ENCODE measurements at regions of chr17 and their contacts with region 1.

Region 1: DNA sequence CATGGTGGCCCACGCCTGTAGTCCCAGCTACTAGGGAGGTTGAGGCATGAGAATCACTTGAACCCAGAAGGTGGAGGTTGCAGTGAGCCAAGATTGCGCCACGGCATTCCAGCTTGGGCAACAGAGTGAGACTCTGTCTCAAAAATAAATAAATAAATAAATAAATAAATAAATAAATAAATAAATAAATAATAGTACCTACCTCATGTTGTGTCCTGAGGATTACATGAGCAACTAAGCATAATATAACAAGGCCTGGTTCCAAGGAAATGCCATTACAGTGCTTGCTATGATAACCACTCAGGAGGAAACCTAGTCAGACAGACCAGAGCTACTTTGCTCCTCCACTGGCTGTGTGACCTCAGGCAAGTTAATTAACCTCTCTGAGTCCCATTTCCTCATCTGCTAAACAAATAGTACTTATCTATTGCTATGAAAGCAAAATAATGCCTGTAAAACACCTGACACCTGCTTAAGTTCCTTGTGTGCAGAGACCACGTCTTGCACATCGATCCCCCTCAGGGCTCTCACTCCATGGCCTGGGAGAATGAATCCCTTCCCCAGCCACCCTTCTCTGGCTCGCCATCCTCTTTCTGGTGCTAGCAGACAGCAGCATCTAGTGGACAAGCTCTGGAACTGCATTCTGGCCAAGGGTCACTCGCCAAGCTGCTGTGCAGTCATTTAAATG is 7.5 kb downstream of the EPOP start:
- DNase-seq: peak; percentile 51 to 78
- H3K4me3 ChIP-seq: no peak overlapping the region
- H3K27ac ChIP-seq: no peak overlapping the region
- H3K4me1 ChIP-seq: peaks cover 4 to 28% (median 16%) of the 10 kb centered on the region in 4 experiments; a peak in 6 of 7 replicates
- H3K27me3 ChIP-seq: peaks cover 26 to 49% (median 46%) of the 10 kb centered on the region in 4 experiments
- CTCF ChIP-seq: peak; percentile 98 to 100 (median 99)
- EP300 ChIP-seq: no peak
- POLR2A ChIP-seq: no peak
- RAD21 ChIP-seq: peak; percentile 100

Region 2: GRCh38 chr17:38454516-38454915 is 212.7 kb before region 1 on chr17:
- CTCF ChIA-PET with region 1: interaction called, 10 read pairs
- POLR2A ChIA-PET with region 1: interaction called, 3 read pairs
- DNase-seq: no peak
- H3K4me3 ChIP-seq: peak overlapping the region; percentile 39 to 57 (median 42); a peak in 6 of 8 replicates
- H3K27ac ChIP-seq: no peak overlapping the region; the same call in 1 of the 2 replicates
- H3K4me1 ChIP-seq: peaks cover 29 to 61% (median 51%) of the 10 kb centered on the region in 4 experiments
- H3K27me3 ChIP-seq: no peaks in the 10 kb centered on the region
- CTCF ChIP-seq: no peak
- EP300 ChIP-seq: no peak
- POLR2A ChIP-seq: no peak; a peak in 1 of 3 replicates
- RAD21 ChIP-seq: no peak

Region 3: GRCh38 chr17:38533866-38534497 is 133.3 kb before region 1 on chr17:
- CTCF ChIA-PET with region 1: interaction called, 109 read pairs
- POLR2A ChIA-PET with region 1: no interaction called
- DNase-seq: no peak
- H3K4me3 ChIP-seq: no peak overlapping the region
- H3K27ac ChIP-seq: no peak overlapping the region
- H3K4me1 ChIP-seq: peaks cover 0 to 19% (median 5%) of the 10 kb centered on the region in 4 experiments; a peak in 5 of 7 replicates
- H3K27me3 ChIP-seq: peaks cover 0 to 7% (median 1%) of the 10 kb centered on the region in 4 experiments; a peak in 3 of 7 replicates
- CTCF ChIP-seq: no peak
- EP300 ChIP-seq: no peak
- POLR2A ChIP-seq: no peak
- RAD21 ChIP-seq: no peak

Region 4: DNA sequence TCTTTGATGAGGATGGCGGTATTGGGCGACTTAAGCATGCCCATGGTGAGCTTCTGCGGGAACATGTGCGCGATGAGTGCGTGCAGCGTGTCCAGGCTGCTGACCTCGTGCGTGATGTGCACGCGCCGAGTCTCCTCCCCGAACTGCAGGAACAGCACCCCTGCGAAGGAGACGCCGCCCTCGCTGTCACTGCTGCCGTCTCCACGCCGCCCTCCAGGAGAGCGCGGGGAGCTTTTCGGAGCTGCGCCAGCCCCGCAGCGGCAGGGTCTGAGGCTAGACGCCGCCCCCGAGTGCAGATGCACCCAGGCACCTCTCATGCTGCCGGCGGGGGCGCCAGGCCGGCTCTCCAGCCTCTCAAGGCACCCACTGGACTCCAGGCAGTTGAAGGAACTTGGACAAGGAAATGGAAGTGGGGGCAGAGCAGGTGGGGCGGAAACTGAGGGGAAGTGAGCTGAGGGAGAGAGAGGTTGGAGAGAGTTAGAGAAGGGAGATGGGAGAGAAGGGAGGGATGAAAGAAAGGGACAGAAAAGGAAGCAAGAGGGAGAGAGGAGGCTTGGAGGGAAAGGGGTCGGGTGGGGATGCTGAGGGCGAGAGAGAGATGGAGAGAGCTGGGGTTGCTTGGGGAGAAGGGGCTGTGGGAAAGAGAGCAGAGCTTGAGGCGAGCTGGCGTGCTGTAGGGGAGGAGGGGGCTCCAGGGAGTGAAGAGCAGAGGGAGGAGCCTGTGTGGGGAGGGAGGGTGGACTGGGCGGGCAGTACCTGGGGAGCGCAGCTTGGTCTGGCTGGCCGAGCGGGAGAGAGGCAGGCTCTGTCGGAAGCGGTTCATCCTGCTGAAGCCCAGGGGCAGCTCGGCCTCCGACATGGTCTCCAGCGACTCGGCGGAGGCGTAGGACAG is 103.6 kb before region 1 on chr17:
- CTCF ChIA-PET with region 1: interaction called, 366 read pairs
- POLR2A ChIA-PET with region 1: interaction called, 18 read pairs
- DNase-seq: peak; percentile 75 to 83
- H3K4me3 ChIP-seq: peak overlapping the region; percentile 28 to 60 (median 48)
- H3K27ac ChIP-seq: no peak overlapping the region
- H3K4me1 ChIP-seq: peaks cover 8 to 50% (median 38%) of the 10 kb centered on the region in 4 experiments
- H3K27me3 ChIP-seq: peaks cover 65 to 95% (median 91%) of the 10 kb centered on the region in 4 experiments
- CTCF ChIP-seq: no peak
- EP300 ChIP-seq: no peak
- POLR2A ChIP-seq: no peak
- RAD21 ChIP-seq: peak in 1 of 2 experiments; percentile 0; a peak in 1 of 4 replicates

Region 5: DNA sequence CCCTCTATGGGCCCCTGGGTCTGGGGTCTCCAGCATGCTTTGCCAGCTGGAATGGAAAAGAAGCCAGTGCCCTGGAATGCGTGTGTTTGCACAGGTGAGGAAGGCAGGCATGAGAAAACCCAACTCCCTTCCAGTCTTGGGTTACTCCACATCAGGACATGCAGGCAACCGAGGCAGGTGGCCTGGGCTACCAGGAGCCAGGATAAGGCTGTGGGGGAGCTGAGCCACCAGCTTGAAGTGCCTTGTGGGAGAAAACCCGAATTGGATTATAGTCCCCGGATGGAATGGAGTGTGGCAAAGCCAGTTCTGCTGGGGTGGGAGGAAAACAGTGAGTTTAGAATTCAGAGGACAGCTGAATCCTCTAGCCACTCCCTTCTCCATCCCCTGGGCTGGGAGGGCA is 68.7 kb before region 1 on chr17:
- CTCF ChIA-PET with region 1: interaction called, 795 read pairs
- POLR2A ChIA-PET with region 1: interaction called, 17 read pairs
- DNase-seq: peak; percentile 88 to 93
- H3K4me3 ChIP-seq: no peak overlapping the region
- H3K27ac ChIP-seq: no peak overlapping the region
- H3K4me1 ChIP-seq: peaks cover 16 to 57% (median 51%) of the 10 kb centered on the region in 4 experiments
- H3K27me3 ChIP-seq: peaks cover 2 to 14% (median 13%) of the 10 kb centered on the region in 4 experiments
- CTCF ChIP-seq: no peak
- EP300 ChIP-seq: peak in 1 of 2 experiments; percentile 70; a peak in 1 of 3 replicates
- POLR2A ChIP-seq: no peak
- RAD21 ChIP-seq: peak in 1 of 2 experiments; percentile 18; a peak in 2 of 4 replicates

Region 6: DNA sequence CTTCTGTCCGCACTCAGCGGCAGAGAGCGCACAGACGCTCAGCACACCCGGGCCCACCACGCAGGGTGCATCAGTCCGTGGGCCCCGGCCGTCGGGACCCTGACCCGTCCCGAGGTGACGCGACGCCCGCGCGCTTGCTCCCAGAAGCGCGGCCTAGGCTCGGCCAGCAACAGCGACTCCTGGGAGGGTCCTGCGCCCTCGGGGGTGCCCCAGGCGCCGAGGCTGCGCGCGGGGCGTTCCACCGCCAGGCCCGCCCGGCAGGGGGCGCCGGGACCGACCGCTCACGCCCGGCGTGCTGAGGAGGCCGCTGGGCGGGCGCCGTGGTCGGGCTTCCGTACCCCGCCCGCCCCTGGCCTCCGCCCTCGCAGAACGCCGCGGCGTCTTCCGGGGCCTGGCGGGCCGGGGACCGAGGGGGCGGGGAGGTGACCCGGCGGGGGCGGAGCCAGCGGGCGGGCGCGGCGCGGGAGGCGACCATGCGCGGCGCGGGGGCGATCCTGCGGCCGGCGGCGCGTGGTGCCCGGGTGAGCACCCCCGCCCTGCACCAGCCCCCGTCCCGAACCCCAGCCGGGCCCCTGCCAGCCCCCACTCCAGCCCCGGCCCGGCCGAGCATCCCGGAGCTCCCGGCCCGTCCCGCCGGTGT is 62.8 kb after region 1 on chr17 and contains the start of gene CISD3:
- CTCF ChIA-PET with region 1: interaction called, 34 read pairs
- POLR2A ChIA-PET with region 1: interaction called, 4 read pairs
- DNase-seq: peak in 1 of 2 experiments; percentile 84
- H3K4me3 ChIP-seq: peak within 1 kb of the TSS; percentile 48 to 72 (median 63)
- H3K27ac ChIP-seq: no peak within 1 kb of the TSS
- H3K4me1 ChIP-seq: peaks cover 0 to 10% (median 5%) of the 10 kb centered on the region in 4 experiments; a peak in 5 of 7 replicates
- H3K27me3 ChIP-seq: peaks cover 0 to 17% (median 7%) of the 10 kb centered on the region in 4 experiments; a peak in 3 of 7 replicates
- CTCF ChIP-seq: peak; percentile 59 to 73 (median 62)
- EP300 ChIP-seq: no peak
- POLR2A ChIP-seq: 0 out of 3 replicates have a peak, but pooled peaks of 1 of the 2 experiments have one; percentile 17
- RAD21 ChIP-seq: peak in 1 of 2 experiments; percentile 47; a peak in 2 of 4 replicates
- total RNA-seq, gene CISD3: 11.1 and 11.6 TPM in 2 replicates

Region 7: GRCh38 chr17:38824899-38825761 is 157.9 kb after region 1 on chr17 and contains the start of gene CWC25:
- CTCF ChIA-PET with region 1: no interaction called
- POLR2A ChIA-PET with region 1: no interaction called
- DNase-seq: peak; percentile 93 to 100
- H3K4me3 ChIP-seq: peak within 1 kb of the TSS; percentile 59 to 94 (median 91)
- H3K27ac ChIP-seq: peak within 1 kb of the TSS; percentile 99
- H3K4me1 ChIP-seq: peaks cover 0 to 3% (median 1%) of the 10 kb centered on the region in 4 experiments; a peak in 2 of 7 replicates
- H3K27me3 ChIP-seq: no peaks in the 10 kb centered on the region
- CTCF ChIP-seq: no peak
- EP300 ChIP-seq: peak in 1 of 2 experiments; percentile 97; a peak in 2 of 3 replicates
- POLR2A ChIP-seq: peak; percentile 91 to 99
- RAD21 ChIP-seq: no peak
- total RNA-seq, gene CWC25: 13.1 and 15.8 TPM in 2 replicates

Region 8: GRCh38 chr17:38853292-38854219 is 186.3 kb after region 1 on chr17 and contains the start of gene RPL23:
- CTCF ChIA-PET with region 1: no interaction called
- POLR2A ChIA-PET with region 1: no interaction called
- DNase-seq: peak; percentile 85 to 90
- H3K4me3 ChIP-seq: peak within 1 kb of the TSS; percentile 90 to 100 (median 97)
- H3K27ac ChIP-seq: peak within 1 kb of the TSS; percentile 97
- H3K4me1 ChIP-seq: peaks cover 3 to 10% (median 5%) of the 10 kb centered on the region in 4 experiments; a peak in 5 of 7 replicates
- H3K27me3 ChIP-seq: no peaks in the 10 kb centered on the region
- CTCF ChIP-seq: no peak
- EP300 ChIP-seq: peak in 1 of 2 experiments; percentile 28; a peak in 1 of 3 replicates
- POLR2A ChIP-seq: peak; percentile 92 to 97
- RAD21 ChIP-seq: no peak
- total RNA-seq, gene RPL23: 2,091 and 2,148 TPM in 2 replicates

Measured in H1 (cell line).